PC-9 (cell line): ENCODE measurements at regions of chr17 and their contacts with region 1.

Region 1: DNA sequence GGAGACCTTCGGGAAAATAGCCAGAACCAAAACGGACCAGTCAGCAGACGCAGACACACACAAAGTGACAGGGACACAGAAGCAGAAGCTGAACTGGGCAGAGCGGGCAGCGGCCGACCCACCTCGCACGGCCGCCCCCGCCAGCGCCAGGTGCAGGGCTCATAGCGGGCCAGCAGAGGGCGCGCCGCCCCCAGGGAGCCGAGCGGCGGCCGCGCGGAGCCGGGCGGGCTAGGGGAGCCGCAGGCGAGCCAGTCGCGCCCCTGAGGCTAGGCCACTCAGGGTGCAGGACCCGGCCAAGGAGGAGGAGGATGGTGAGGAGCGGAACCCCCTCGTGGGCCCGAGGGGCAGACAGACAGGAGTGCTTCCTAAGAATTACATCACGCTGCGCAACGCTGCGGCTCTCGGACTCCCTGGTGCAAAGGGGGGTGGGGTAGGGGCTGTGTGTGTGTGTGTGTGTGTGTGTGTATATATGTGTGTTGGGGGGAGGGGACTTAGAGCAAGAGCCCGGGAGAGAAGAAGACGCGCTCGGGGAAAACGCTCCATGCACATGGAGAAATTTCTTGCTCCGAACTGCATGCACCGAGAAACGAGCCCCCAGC is 913 bp upstream of the NOG start:
- DNase-seq: peak; percentile 73 to 76
- H3K4me3 ChIP-seq: peak overlapping the region; percentile 97
- H3K27ac ChIP-seq: no peak overlapping the region
- H3K4me1 ChIP-seq: peaks cover 5% of the 10 kb centered on the region
- H3K27me3 ChIP-seq: no peaks in the 10 kb centered on the region
- CTCF ChIP-seq: peak; percentile 81

Region 2: DNA sequence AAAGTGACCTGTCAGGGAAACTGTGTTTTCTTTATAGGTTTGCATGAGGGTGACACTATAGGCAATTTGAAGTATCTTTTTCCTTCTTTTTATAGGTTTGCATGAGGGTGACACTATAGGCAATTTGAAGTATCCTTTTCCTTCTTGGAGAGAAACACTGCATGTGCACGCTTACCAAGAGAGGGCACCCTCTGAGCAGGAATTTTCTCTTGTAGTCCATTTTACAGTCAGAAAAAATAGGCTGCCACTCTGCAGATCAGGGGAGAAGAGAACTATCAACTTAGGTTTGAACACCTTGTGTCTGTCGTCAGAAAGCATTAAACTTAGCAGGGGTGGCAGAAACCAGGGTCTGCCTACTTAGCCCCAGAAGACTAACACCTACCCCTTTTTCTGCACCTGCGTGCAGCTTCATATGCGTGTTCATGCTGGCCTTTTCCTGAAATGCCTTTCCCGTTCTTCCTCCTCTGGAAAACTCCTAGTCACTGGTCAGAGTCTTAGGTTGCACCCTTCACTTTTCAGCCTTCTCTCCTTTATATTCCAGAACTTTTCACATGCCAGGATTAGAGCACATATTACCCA is 1065.0 kb before region 1 on chr17:
- CTCF ChIA-PET with region 1: no interaction called
- POLR2A ChIA-PET with region 1: no interaction called
- intact Hi-C with region 1: loop called (anchors 5 kb)
- DNase-seq: peak; percentile 15 to 41
- H3K4me3 ChIP-seq: no peak overlapping the region
- H3K27ac ChIP-seq: no peak overlapping the region
- H3K4me1 ChIP-seq: no peaks in the 10 kb centered on the region
- H3K27me3 ChIP-seq: 0 out of 2 replicates have a peak, but pooled peaks cover 5% of the 10 kb centered on the region
- CTCF ChIP-seq: peak; percentile 69

Region 3: DNA sequence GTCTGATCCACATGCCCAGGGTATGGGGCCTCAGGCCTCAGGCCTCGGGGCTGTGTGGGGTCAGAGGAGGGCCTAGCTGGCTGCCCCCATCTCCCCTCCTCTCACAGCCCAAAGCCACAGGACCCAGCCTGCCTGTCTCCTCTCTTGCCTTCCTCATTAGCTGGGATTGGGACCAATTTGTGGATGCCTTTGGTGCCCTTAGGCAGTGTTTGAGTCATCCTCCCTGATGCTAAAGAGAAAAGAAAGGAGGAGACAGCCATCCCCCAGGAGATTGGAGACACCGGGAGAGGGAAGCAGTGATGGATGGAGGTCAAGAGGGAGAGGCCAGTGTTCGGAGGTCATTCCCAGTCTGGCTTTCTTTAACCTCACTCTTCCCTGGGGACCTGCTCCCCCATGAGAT is 22.4 kb before region 1 on chr17:
- CTCF ChIA-PET with region 1: no interaction called
- POLR2A ChIA-PET with region 1: no interaction called
- intact Hi-C with region 1: no loop called
- DNase-seq: no peak
- H3K4me3 ChIP-seq: no peak overlapping the region
- H3K27ac ChIP-seq: no peak overlapping the region
- H3K4me1 ChIP-seq: no peaks in the 10 kb centered on the region
- H3K27me3 ChIP-seq: peaks cover 8% of the 10 kb centered on the region; the same call in 1 of the 2 replicates
- CTCF ChIP-seq: no peak

Region 4: GRCh38 chr17:56679115-56679766 is 86.7 kb after region 1 on chr17:
- CTCF ChIA-PET with region 1: interaction called, 3 read pairs
- POLR2A ChIA-PET with region 1: interaction called, 15 read pairs
- intact Hi-C with region 1: loop called (anchors 1 kb)
- DNase-seq: no peak
- H3K4me3 ChIP-seq: peak overlapping the region; percentile 4; the same call in 1 of the 2 replicates
- H3K27ac ChIP-seq: peak overlapping the region; percentile 96
- H3K4me1 ChIP-seq: peaks cover 100% of the 10 kb centered on the region
- H3K27me3 ChIP-seq: no peaks in the 10 kb centered on the region
- CTCF ChIP-seq: peak; percentile 80

Region 5: GRCh38 chr17:56715613-56716357 is 123.2 kb after region 1 on chr17:
- CTCF ChIA-PET with region 1: interaction called, 34 read pairs
- POLR2A ChIA-PET with region 1: no interaction called
- intact Hi-C with region 1: loop called (anchors 1 kb)
- DNase-seq: peak; percentile 75 to 76
- H3K4me3 ChIP-seq: no peak overlapping the region
- H3K27ac ChIP-seq: no peak overlapping the region
- H3K4me1 ChIP-seq: peaks cover 14% of the 10 kb centered on the region; the same call in 1 of the 2 replicates
- H3K27me3 ChIP-seq: no peaks in the 10 kb centered on the region
- CTCF ChIP-seq: peak; percentile 94

Region 6: DNA sequence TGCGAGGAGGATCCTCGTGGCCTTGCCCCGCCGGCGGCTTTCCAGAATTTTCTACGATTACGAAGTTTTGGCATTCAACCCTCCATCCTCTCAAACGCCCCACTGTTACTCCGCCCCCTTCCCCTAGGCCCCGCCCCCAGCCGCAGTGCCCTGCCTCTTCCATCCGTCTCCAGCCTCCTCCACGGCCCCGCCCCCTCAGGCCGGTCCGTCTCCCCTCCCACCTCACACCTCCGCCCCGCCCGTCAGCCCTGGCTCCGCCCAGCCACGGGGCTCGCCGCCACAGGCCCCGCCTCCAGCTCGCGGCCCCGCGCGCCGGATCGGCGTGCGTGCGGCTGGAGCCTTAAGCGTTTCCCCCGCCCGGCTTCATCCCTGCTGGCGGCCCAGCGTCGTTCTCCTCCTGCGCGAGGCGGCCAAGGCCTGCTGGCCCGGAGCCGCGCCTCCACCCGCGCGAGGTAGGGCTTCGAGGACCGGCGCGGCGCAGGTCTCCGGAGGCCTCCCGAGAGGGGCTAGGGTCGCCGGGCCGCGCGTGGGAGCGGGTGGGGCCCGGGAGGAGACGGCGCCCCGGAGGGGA is 241.3 kb after region 1 on chr17 and contains the starts of genes C17orf67 and DGKE:
- CTCF ChIA-PET with region 1: no interaction called
- POLR2A ChIA-PET with region 1: no interaction called
- intact Hi-C with region 1: loop called (anchors 5 kb)
- DNase-seq: peak; percentile 82 to 97
- H3K4me3 ChIP-seq: peak within 1 kb of the TSS; percentile 94
- H3K27ac ChIP-seq: peak within 1 kb of the TSS; percentile 24
- H3K4me1 ChIP-seq: peaks cover 32% of the 10 kb centered on the region
- H3K27me3 ChIP-seq: no peaks in the 10 kb centered on the region
- CTCF ChIP-seq: no peak
- total RNA-seq, gene C17orf67: 4.3 and 6.4 TPM in 2 replicates
- total RNA-seq, gene DGKE: 11.0 and 16.2 TPM in 2 replicates

Region 7: GRCh38 chr17:57138030-57138911 is 545.7 kb after region 1 on chr17:
- CTCF ChIA-PET with region 1: no interaction called
- POLR2A ChIA-PET with region 1: interaction called, 13 read pairs
- intact Hi-C with region 1: no loop called
- DNase-seq: no peak
- H3K4me3 ChIP-seq: no peak overlapping the region
- H3K27ac ChIP-seq: no peak overlapping the region
- H3K4me1 ChIP-seq: no peaks in the 10 kb centered on the region
- H3K27me3 ChIP-seq: peaks cover 8% of the 10 kb centered on the region; the same call in 1 of the 2 replicates
- CTCF ChIP-seq: no peak